ENCODE measurements at regions of chr6 and their contacts with region 1.

Region 1: DNA sequence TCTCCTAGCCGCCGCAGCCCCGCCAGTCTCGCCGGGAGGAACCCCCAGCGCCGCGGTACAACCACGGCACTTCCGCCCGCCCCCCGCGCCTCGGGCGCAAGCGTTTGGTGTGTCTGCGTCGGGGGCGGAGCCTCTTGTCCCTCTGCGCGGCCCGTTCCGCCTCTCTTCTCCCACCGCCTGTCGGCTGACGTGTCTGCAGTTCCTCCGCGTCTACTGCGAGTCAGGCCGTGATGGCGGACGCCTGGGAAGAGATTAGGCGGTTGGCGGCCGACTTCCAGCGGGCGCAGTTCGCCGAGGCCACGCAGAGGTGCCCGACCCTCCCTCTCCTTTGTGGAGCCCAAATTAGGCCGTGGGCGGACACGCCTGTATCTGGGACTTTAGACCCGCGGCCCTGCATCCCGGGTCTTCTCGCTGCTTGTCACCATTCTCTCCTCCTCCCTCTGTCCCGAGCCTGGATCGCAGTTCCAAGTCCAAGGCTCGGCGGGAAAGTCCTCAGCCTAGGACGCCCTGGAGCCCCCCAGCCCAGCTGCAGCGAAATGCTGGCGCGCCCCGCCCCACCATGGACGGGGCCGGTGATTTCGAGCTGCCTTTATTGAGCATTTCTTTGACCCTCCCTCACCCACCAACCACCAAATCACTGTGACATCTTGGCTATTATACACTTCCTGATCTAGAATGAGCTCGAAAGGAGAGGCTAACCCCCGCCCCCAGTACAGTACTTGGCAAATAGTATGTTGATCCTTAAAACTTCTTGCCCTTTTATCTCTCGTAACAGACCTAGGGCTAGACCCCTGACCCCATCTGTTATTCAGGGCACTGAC is at the start of gene UFL1:
- DNase-seq: peak; percentile 95
- ATAC-seq: peak; percentile 96
- H3K4me3 Mint-ChIP-seq: peak within 1 kb of the TSS; percentile 98
- H3K27ac Mint-ChIP-seq: peak within 1 kb of the TSS; percentile 99
- H3K4me1 Mint-ChIP-seq: peaks cover 16% of the 10 kb centered on the region
- H3K27me3 Mint-ChIP-seq: no peaks in the 10 kb centered on the region
- CTCF ChIP-seq: no peak
- total RNA-seq, gene UFL1: 28.6 to 30.8 TPM

Region 2: GRCh38 chr6:95670011-95670463 is 851.8 kb before region 1 on chr6:
- CTCF ChIA-PET with region 1: no interaction called
- POLR2A ChIA-PET with region 1: no interaction called
- intact Hi-C with region 1: no loop called
- DNase-seq: no peak
- ATAC-seq: no peak
- H3K4me3 Mint-ChIP-seq: no peak overlapping the region
- H3K27ac Mint-ChIP-seq: no peak overlapping the region
- H3K4me1 Mint-ChIP-seq: no peaks in the 10 kb centered on the region
- H3K27me3 Mint-ChIP-seq: peaks cover 3% of the 10 kb centered on the region
- CTCF ChIP-seq: no peak

Region 3: GRCh38 chr6:96468681-96469224 is 53.1 kb before region 1 on chr6:
- CTCF ChIA-PET with region 1: interaction called, 3 read pairs
- POLR2A ChIA-PET with region 1: no interaction called
- intact Hi-C with region 1: loop called (anchors 2 kb)
- DNase-seq: no peak
- ATAC-seq: no peak
- H3K4me3 Mint-ChIP-seq: no peak overlapping the region
- H3K27ac Mint-ChIP-seq: no peak overlapping the region
- H3K4me1 Mint-ChIP-seq: peaks cover 22% of the 10 kb centered on the region
- H3K27me3 Mint-ChIP-seq: peaks cover 1% of the 10 kb centered on the region
- CTCF ChIP-seq: peak; percentile 52

Region 4: GRCh38 chr6:96554559-96554958 is 32.7 kb after region 1 on chr6:
- CTCF ChIA-PET with region 1: no interaction called
- POLR2A ChIA-PET with region 1: no interaction called
- intact Hi-C with region 1: no loop called
- DNase-seq: no peak
- ATAC-seq: no peak
- H3K4me3 Mint-ChIP-seq: no peak overlapping the region
- H3K27ac Mint-ChIP-seq: no peak overlapping the region
- H3K4me1 Mint-ChIP-seq: no peaks in the 10 kb centered on the region
- H3K27me3 Mint-ChIP-seq: no peaks in the 10 kb centered on the region
- CTCF ChIP-seq: no peak

Region 5: DNA sequence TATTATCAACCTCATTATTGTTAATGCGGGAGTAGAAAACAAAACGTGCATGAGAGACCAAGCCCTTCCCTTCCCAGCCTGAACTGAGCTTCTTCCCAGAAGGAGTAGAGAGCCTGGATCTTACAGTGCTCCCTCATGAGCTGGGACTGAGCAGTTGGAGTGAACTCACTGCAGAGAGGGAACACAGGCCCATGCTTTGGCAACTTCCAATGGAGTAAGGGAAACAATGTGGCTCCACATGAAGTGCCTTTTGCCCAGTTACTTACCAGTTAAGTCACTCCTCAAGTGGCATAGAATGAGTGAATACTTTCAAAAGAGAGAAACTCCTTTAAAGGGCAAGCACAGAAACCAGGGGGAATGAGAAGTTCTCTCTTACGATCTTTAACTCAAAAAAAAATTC is 53.5 kb after region 1 on chr6:
- CTCF ChIA-PET with region 1: no interaction called
- POLR2A ChIA-PET with region 1: no interaction called
- intact Hi-C with region 1: no loop called
- DNase-seq: no peak
- ATAC-seq: no peak
- H3K4me3 Mint-ChIP-seq: no peak overlapping the region
- H3K27ac Mint-ChIP-seq: no peak overlapping the region
- H3K4me1 Mint-ChIP-seq: no peaks in the 10 kb centered on the region
- H3K27me3 Mint-ChIP-seq: peaks cover 15% of the 10 kb centered on the region
- CTCF ChIP-seq: no peak

Measured in activated CD8-positive, alpha-beta T cell treated with anti-CD3 and anti-CD28 coated beads for 36 hours (primary cell).